OCI-LY7 (cell line): ENCODE measurements at regions of chr11 and their contacts with region 1.

Region 1: DNA sequence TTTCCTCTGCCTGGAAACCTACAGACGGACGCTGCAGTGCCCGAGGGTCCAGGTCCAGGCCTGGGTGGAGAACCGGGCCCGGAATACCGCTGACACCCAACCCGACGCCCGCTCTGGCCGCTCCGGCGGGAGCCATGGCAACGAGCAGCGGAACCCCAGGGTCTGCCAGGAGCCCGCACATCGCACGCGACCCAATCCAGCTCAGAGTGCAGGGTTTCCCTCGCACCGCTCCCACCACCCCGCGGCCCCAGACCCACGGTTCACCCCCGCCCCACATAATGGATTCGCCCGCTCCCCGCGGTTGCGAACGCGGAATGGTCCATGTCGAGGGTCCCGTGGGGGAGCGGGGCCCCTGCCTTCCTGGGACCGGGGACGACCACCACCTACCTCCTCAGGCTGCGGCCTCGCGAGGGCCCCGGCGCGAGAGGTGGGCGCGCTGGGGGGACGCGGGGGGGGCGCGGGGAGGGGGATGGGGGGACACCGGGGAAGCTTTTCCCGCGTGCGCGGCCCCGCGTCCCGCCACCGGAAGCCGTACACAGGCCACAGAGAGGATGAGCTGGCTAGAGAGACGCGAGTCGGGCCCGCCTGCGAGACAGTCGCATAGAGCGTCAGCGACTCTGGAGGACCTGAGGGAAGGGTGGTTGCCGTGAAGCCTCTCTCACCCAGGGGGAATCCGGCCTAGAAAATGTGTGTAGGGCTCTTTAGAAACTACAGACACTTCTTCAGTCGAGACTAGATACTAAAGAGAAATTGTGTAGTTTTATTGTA is at the start of gene SSRP1:
- DNase-seq: peak; percentile 95
- H3K4me3 ChIP-seq: peak within 1 kb of the TSS; percentile 76
- H3K27ac ChIP-seq: peak within 1 kb of the TSS; percentile 53
- H3K4me1 ChIP-seq: peaks cover 25% of the 10 kb centered on the region
- CTCF ChIP-seq: peak; percentile 31; the same call in 1 of the 2 replicates
- total RNA-seq, gene SSRP1: 146 and 185 TPM in 2 replicates

Region 2: DNA sequence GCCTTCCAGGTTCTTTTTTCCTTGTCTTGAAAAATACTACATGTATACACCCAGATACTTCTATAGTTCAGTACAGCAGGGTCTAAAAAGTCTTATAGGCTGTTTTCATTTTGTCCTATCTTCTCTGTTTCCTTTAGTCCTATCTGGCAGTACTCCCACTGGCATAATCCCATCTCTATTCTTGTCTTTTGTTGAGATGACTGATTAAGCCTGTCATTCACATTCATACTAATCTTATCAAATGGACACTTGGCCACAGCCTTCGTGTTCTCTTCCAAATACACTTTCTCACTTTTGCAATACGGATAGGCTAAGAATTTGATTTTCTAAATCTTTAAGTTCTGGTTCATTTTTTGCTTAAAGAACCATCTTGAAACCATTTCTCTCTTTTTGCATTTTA is 304.0 kb before region 1 on chr11:
- CTCF ChIA-PET with region 1: no interaction called
- POLR2A ChIA-PET with region 1: no interaction called
- intact Hi-C with region 1: no loop called
- DNase-seq: no peak
- H3K4me3 ChIP-seq: no peak overlapping the region
- H3K27ac ChIP-seq: no peak overlapping the region
- H3K4me1 ChIP-seq: no peaks in the 10 kb centered on the region
- CTCF ChIP-seq: no peak

Region 3: DNA sequence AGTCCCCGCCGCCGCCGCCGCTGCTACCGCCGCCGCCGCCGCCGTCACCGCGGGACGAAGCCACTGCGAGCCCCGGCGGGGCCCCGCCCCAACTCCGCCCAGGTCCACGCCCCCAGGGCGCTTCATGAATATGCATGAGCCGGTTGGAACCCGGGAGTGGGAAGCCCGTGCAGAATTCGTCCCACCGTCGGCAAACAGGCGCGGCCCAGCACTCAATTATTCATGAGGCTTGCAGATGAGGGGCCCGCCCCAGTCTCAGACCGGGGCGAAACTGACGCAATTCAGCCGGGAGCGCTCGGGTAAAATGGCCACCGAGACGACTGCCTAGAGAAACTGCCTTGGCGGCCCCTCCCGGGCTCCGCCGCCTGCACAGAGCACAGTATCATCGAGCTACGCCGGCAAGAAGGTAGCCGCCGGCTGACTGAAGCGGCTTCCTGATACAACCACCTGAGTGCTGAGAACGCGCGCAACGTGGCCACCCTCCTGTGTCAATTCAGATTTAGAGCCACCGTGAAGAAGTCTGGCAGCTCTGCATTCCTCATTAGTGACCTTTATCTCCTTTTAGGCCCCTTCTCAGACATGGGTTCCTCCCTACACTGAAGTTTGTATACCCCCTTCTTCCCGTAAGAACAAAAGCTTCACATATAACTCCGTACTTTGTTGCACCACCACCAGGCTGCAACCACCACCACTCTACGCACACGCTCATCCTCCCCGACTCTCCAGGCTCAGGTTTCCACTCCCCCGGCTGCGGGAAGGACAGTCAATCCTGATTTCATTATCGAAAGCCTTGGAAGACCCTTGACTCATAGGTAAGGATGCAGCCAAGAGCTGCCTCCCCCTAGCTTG is 10.4 kb before region 1 on chr11 and contains the start of gene TNKS1BP1:
- CTCF ChIA-PET with region 1: interaction called, 7 read pairs
- POLR2A ChIA-PET with region 1: interaction called, 57 read pairs
- intact Hi-C with region 1: loop called (anchors 1 kb)
- DNase-seq: peak; percentile 96
- H3K4me3 ChIP-seq: peak within 1 kb of the TSS; percentile 70
- H3K27ac ChIP-seq: peak within 1 kb of the TSS; percentile 86
- H3K4me1 ChIP-seq: peaks cover 28% of the 10 kb centered on the region
- CTCF ChIP-seq: no peak
- total RNA-seq, gene TNKS1BP1: 5.3 and 6.4 TPM in 2 replicates

Region 4: GRCh38 chr11:57368106-57368844 is 32.7 kb after region 1 on chr11:
- CTCF ChIA-PET with region 1: no interaction called
- POLR2A ChIA-PET with region 1: no interaction called
- intact Hi-C with region 1: no loop called
- DNase-seq: no peak
- H3K4me3 ChIP-seq: no peak overlapping the region
- H3K27ac ChIP-seq: no peak overlapping the region
- H3K4me1 ChIP-seq: no peaks in the 10 kb centered on the region
- CTCF ChIP-seq: no peak